GM10248 (cell line): ENCODE measurements at regions of chr15 and their contacts with region 1.

Region 1: DNA sequence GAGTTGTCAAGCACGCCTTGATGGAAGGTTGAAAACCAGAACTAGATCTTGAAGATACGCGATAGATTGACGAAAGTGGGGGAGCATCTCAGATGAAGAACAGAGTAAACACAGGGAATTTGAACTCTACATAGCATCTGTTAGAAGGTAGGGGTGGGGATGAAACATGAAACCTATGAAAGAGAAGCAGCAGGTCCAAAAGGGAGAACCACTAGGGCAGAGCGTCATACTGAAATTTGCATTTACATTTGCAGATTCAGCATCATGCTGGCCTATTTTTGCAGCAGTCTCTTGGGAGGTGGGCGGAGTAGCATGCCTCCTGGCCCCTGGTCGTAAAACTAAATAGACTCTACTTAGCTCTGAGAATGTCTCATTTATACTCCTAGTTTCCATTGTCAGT is 46.1 kb upstream of the RASGRP1 start:
- DNase-seq: no peak
- CTCF ChIP-seq: no peak

Region 2: DNA sequence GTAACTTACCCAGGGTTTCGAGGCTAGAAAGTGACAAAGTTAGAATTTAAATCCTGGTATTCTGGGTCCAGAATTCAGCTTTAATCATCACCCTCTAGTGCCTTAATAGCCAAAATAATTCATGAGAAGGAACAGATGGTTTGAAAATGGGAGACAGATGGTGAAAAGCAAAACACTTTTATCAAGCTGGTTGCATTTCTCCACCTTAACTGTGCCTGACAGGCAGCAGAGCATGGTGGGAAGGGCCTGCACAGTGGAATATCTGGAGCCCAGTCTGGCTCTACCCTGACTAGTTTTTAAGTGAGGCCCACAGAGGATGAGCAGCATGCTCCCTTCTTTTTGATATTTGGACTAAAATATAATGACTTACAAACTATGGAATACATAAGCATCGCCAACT is 10.5 kb before region 1 on chr15:
- CTCF ChIA-PET with region 1: interaction called, 14 read pairs
- POLR2A ChIA-PET with region 1: no interaction called
- DNase-seq: no peak
- CTCF ChIP-seq: no peak